ENCODE measurements at regions of chr11 and their contacts with region 1.

Region 1: GRCh38 chr11:34373727-34374126 is 15.9 kb upstream of the ABTB2 start:
- DNase-seq: no peak
- H3K4me3 ChIP-seq: no peak overlapping the region
- H3K4me3 Mint-ChIP-seq: no peak overlapping the region
- H3K27ac ChIP-seq: no peak overlapping the region
- H3K27ac Mint-ChIP-seq: no peak overlapping the region
- H3K4me1 ChIP-seq: peaks cover 11 to 14% of the 10 kb centered on the region in 2 donors
- H3K4me1 Mint-ChIP-seq: peaks cover 13% of the 10 kb centered on the region
- H3K27me3 ChIP-seq: no peaks in the 10 kb centered on the region
- H3K27me3 Mint-ChIP-seq: no peaks in the 10 kb centered on the region
- CTCF ChIP-seq: no peak

Region 2: GRCh38 chr11:34174412-34175041 is 199.2 kb before region 1 on chr11:
- intact Hi-C with region 1: no loop called
- DNase-seq: peak; percentile 57 to 75 (median 69)
- H3K4me3 ChIP-seq: peak overlapping the region in 1 of 3 experiments; percentile 51
- H3K4me3 Mint-ChIP-seq: peak overlapping the region; percentile 74 to 91
- H3K27ac ChIP-seq: no peak overlapping the region
- H3K27ac Mint-ChIP-seq: peak overlapping the region in 1 of 7 donors; percentile 41
- H3K4me1 ChIP-seq: peaks cover 9 to 11% of the 10 kb centered on the region in 2 donors
- H3K4me1 Mint-ChIP-seq: peaks cover 11% of the 10 kb centered on the region
- H3K27me3 ChIP-seq: no peaks in the 10 kb centered on the region
- H3K27me3 Mint-ChIP-seq: peaks cover 0 to 7% (median 0%) of the 10 kb centered on the region in 3 donors
- CTCF ChIP-seq: peak; percentile 92

Region 3: GRCh38 chr11:34405079-34405858 is 31.5 kb after region 1 on chr11:
- intact Hi-C with region 1: loop called (anchors 5 kb)
- DNase-seq: peak; percentile 87 to 94 (median 93)
- H3K4me3 ChIP-seq: peak overlapping the region; percentile 44 to 82 (median 70)
- H3K4me3 Mint-ChIP-seq: peak overlapping the region; percentile 85 to 90
- H3K27ac ChIP-seq: peak overlapping the region in 1 of 2 donors; percentile 77
- H3K27ac Mint-ChIP-seq: peak overlapping the region; percentile 84 to 93 (median 90)
- H3K4me1 ChIP-seq: peaks cover 8 to 18% of the 10 kb centered on the region in 2 donors
- H3K4me1 Mint-ChIP-seq: peaks cover 27% of the 10 kb centered on the region
- H3K27me3 ChIP-seq: no peaks in the 10 kb centered on the region
- H3K27me3 Mint-ChIP-seq: peaks cover 0 to 1% (median 0%) of the 10 kb centered on the region in 3 donors
- CTCF ChIP-seq: no peak

Region 4: GRCh38 chr11:34411791-34412190 is 38.1 kb after region 1 on chr11:
- intact Hi-C with region 1: loop called (anchors 5 kb)
- DNase-seq: peak in 1 of 3 donors; percentile 48
- H3K4me3 ChIP-seq: no peak overlapping the region
- H3K4me3 Mint-ChIP-seq: no peak overlapping the region
- H3K27ac ChIP-seq: no peak overlapping the region
- H3K27ac Mint-ChIP-seq: peak overlapping the region in 2 of 7 donors; percentile 30 to 59
- H3K4me1 ChIP-seq: peaks cover 13 to 15% of the 10 kb centered on the region in 2 donors
- H3K4me1 Mint-ChIP-seq: peaks cover 19% of the 10 kb centered on the region
- H3K27me3 ChIP-seq: no peaks in the 10 kb centered on the region
- H3K27me3 Mint-ChIP-seq: no peaks in the 10 kb centered on the region
- CTCF ChIP-seq: no peak

Region 5: DNA sequence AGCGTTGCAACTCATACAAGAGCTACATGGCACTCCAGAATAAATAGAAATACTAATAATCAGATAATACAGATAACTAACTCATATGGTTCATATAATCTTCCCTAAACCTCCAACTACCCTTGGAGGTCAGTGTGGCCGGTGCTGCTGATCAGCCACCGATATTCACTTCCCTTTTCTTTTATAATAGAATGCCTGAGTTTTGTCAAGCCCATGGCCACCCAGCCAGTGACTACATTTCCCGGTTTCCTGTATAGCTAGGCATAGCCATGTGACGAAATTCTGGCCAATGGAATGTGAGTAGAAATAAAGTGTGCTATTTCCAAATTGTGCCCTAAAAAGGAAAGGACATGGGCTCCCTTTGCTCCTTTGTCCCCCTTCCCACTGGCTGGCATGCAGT is 59.1 kb after region 1 on chr11:
- intact Hi-C with region 1: loop called in 1 of 2 experiments (anchors 5 kb)
- DNase-seq: peak; percentile 27 to 70 (median 60)
- H3K4me3 ChIP-seq: no peak overlapping the region
- H3K4me3 Mint-ChIP-seq: no peak overlapping the region
- H3K27ac ChIP-seq: peak overlapping the region in 1 of 2 donors; percentile 68
- H3K27ac Mint-ChIP-seq: peak overlapping the region in 6 of 7 donors; percentile 19 to 89 (median 68)
- H3K4me1 ChIP-seq: peaks cover 54 to 63% of the 10 kb centered on the region in 2 donors
- H3K4me1 Mint-ChIP-seq: peaks cover 55% of the 10 kb centered on the region
- H3K27me3 ChIP-seq: no peaks in the 10 kb centered on the region
- H3K27me3 Mint-ChIP-seq: peaks cover 0 to 4% (median 0%) of the 10 kb centered on the region in 3 donors
- CTCF ChIP-seq: no peak

Measured in CD14-positive monocyte (primary cell).